ENCODE measurements at regions of chr19 and their contacts with region 1.

Region 1: GRCh38 chr19:14786421-14786851 is 8.1 kb upstream of the ADGRE2 start:
- DNase-seq: no peak
- H3K4me3 ChIP-seq: no peak overlapping the region
- H3K27me3 ChIP-seq: no peaks in the 10 kb centered on the region
- CTCF ChIP-seq: peak; percentile 82

Region 2: DNA sequence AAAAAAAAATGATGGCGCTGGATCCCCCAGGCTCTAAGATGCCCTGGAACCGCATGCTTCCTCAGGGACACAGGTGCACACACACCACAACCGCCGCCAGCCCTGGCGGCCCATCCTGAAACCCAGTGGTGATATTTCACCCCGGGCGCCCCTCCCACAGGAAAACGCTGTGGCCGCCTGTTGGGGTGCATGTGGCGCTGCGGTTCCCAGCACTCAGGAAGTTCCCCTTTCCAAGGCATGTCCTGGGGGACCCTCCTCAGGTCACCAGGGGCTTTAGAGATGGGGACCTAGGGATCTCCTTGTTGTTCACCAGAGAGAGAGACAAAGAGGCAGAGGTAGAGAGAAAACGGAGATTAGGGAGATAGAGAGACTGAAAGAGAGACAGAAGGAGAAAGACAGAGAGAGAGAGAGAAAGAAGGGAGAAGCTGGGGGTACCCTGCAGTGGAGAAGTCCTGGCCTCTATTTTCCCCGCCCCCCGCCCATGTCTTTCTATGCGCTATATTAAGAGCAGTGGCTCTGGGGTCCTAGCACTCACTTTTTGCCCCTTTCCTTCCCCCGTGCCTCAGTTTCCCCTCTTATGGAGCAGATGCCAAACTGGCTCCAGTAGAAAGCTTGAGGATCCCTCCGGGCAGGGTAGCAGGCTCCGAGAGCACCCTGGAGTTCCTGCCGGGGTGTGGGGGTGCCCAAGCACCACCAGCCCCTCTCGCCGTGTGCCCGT is 10.4 kb before region 1 on chr19:
- CTCF ChIA-PET with region 1: interaction called, 13 read pairs
- POLR2A ChIA-PET with region 1: no interaction called
- DNase-seq: no peak
- H3K4me3 ChIP-seq: peak overlapping the region; percentile 36
- H3K27me3 ChIP-seq: no peaks in the 10 kb centered on the region
- CTCF ChIP-seq: no peak

Region 3: DNA sequence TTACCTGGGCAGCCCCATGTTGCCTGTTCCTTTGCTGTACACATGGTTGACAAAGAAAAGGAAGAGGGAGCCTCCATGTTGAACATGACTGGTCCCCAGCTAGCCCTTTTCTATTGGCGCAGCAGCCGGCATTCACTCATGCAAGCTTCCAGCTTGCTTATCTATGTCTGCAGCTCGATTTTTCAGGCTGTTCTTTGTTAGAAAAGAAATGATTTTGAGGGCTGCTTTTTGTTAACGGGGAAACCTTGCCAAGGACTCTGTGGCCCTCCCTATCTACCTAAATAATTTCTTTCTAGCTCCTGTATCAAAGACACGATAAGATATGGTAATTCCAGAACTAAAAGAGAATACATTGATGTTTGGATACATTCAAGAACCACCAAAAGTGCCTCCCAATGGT is 12.3 kb after region 1 on chr19:
- CTCF ChIA-PET with region 1: interaction called, 11 read pairs
- POLR2A ChIA-PET with region 1: no interaction called
- DNase-seq: no peak
- H3K4me3 ChIP-seq: no peak overlapping the region
- H3K27me3 ChIP-seq: no peaks in the 10 kb centered on the region
- CTCF ChIP-seq: no peak

Region 4: GRCh38 chr19:14804765-14805164 is 18.3 kb after region 1 on chr19:
- CTCF ChIA-PET with region 1: interaction called, 11 read pairs
- POLR2A ChIA-PET with region 1: no interaction called
- DNase-seq: no peak
- H3K4me3 ChIP-seq: no peak overlapping the region
- H3K27me3 ChIP-seq: no peaks in the 10 kb centered on the region
- CTCF ChIP-seq: no peak

Region 5: GRCh38 chr19:14890643-14891379 is 104.4 kb after region 1 on chr19:
- CTCF ChIA-PET with region 1: interaction called, 11 read pairs
- POLR2A ChIA-PET with region 1: no interaction called
- DNase-seq: no peak
- H3K4me3 ChIP-seq: no peak overlapping the region
- H3K27me3 ChIP-seq: peaks cover 2% of the 10 kb centered on the region; the same call in 1 of the 2 replicates
- CTCF ChIP-seq: no peak